Activated CD8-positive, alpha-beta T cell treated with anti-CD3 and anti-CD28 coated beads, Interleukin-2, amount 10 ng/mL, durations not matched to agents 7 days and 5 days (primary cell): ENCODE measurements at regions of chr3 and their contacts with region 1.

Region 1: GRCh38 chr3:120795017-120795648 is 52.6 kb downstream of the GTF2E1 start:
- DNase-seq: peak; percentile 87
- ATAC-seq: peak; percentile 98
- H3K4me3 Mint-ChIP-seq: no peak overlapping the region
- H3K27ac Mint-ChIP-seq: no peak overlapping the region
- H3K4me1 Mint-ChIP-seq: no peaks in the 10 kb centered on the region
- H3K27me3 Mint-ChIP-seq: peaks cover 3% of the 10 kb centered on the region

Region 2: DNA sequence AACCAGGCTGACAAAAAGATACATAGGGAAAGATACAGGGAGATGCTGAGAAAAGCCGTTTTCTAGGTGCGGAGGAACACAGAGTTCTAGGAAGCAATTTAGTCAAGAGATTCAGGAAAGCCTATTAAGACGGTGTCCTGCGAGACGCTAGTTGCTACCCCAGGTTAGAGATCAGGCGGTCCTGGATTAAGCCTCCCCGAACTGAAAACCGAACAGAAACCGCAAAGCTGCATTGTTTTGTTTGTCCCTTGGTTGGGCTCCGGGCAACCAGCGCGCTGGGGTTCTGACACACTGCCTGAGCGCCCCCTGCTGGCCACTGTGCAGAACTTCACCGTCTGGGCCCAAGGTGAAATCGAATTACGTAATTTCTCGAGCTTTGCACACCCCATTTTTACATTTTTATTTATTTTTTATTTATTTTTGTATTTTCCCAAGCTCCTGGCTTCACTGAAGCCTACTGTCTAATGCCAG is 236.3 kb before region 1 on chr3:
- CTCF ChIA-PET with region 1: interaction called, 65 read pairs
- POLR2A ChIA-PET with region 1: interaction called, 5 read pairs
- DNase-seq: peak; percentile 92
- ATAC-seq: peak; percentile 93
- H3K4me3 Mint-ChIP-seq: peak overlapping the region; percentile 76
- H3K27ac Mint-ChIP-seq: peak overlapping the region; percentile 45
- H3K4me1 Mint-ChIP-seq: peaks cover 11% of the 10 kb centered on the region
- H3K27me3 Mint-ChIP-seq: peaks cover 3% of the 10 kb centered on the region

Region 3: DNA sequence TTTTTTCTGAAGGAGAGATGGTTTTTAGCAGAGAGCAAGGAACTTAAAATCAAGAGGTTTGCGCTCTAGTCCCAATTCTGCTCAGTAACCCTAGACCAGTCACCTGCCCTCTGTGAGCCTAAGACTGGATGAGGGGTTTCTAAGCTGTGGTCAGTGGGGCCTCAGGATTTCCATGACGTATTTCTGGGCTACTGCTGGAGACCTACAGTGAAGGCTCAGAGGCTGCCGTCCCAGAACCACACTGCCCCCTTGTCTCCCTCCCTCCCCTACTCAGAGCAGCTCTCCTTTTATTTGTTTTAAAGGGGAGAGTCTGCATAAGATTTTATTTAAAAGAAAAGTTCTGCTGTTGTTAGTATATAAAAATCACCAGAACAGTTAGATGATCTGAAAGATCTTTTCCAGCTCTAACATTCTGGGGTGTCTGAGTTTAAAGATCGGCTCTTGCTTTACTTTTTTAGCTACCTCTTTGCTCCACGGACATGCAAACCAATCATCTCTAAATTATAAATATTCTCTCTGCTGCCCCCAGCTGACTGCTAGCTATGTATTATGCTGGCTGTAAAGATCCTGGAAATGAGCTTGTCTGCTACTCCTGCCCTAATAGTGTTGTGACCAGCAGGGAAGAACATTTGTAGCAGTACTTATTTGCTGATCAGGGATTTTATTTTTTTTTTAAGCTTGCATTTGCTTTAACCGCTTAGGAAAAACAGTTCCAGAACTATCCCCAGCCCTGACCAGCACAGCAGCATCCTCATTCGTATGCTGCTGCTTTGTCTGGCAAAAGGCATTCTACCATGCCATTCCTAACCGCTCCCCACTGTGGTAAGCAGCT is 227.5 kb before region 1 on chr3:
- CTCF ChIA-PET with region 1: interaction called, 65 read pairs
- POLR2A ChIA-PET with region 1: interaction called, 3 read pairs
- DNase-seq: no peak
- ATAC-seq: peak; percentile 63
- H3K4me3 Mint-ChIP-seq: no peak overlapping the region
- H3K27ac Mint-ChIP-seq: no peak overlapping the region
- H3K4me1 Mint-ChIP-seq: peaks cover 2% of the 10 kb centered on the region
- H3K27me3 Mint-ChIP-seq: peaks cover 2% of the 10 kb centered on the region

Region 4: DNA sequence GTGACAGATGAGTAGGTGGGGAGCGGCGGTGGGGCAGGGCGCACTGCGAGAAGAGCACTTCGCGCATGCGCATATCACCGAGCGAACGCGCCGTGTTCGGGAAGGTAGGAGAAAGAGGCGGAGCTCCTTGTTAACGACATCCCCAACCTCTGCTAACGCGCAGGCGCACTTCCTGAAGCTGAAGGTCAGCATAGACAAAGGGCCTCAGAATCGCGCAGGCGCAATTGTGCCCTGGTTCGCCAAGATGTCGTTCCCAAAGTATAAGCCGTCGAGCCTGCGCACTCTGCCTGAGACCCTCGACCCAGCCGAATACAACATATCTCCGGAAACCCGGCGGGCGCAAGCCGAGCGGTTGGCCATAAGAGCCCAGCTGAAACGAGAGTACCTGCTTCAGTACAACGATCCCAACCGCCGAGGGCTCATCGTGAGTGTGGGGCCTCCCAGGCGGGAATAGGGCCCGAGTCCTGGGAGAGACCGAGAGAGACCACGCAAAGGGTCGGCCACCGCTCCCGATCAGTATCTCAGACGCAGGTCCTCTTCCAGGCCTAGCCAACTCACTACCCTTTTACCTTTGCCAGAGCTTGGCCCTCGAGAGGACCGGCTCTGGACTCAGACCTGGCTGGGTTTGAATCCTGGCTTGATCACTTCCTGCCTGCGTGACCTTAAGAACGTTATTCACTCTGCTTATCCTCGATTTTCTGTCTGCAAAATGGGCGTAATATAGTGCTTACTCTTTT is 198.8 kb before region 1 on chr3 and contains the start of gene NDUFB4:
- CTCF ChIA-PET with region 1: interaction called, 24 read pairs
- POLR2A ChIA-PET with region 1: interaction called, 5 read pairs
- DNase-seq: peak; percentile 97
- ATAC-seq: peak; percentile 99
- H3K4me3 Mint-ChIP-seq: peak within 1 kb of the TSS; percentile 87
- H3K27ac Mint-ChIP-seq: peak within 1 kb of the TSS; percentile 94
- H3K4me1 Mint-ChIP-seq: peaks cover 8% of the 10 kb centered on the region
- H3K27me3 Mint-ChIP-seq: peaks cover 3% of the 10 kb centered on the region
- total RNA-seq, gene NDUFB4: 119 to 124 TPM

Region 5: GRCh38 chr3:120730576-120731542 is 64.3 kb before region 1 on chr3:
- CTCF ChIA-PET with region 1: no interaction called
- POLR2A ChIA-PET with region 1: no interaction called
- DNase-seq: no peak
- ATAC-seq: no peak
- H3K4me3 Mint-ChIP-seq: no peak overlapping the region
- H3K27ac Mint-ChIP-seq: no peak overlapping the region
- H3K4me1 Mint-ChIP-seq: no peaks in the 10 kb centered on the region
- H3K27me3 Mint-ChIP-seq: no peaks in the 10 kb centered on the region

Region 6: DNA sequence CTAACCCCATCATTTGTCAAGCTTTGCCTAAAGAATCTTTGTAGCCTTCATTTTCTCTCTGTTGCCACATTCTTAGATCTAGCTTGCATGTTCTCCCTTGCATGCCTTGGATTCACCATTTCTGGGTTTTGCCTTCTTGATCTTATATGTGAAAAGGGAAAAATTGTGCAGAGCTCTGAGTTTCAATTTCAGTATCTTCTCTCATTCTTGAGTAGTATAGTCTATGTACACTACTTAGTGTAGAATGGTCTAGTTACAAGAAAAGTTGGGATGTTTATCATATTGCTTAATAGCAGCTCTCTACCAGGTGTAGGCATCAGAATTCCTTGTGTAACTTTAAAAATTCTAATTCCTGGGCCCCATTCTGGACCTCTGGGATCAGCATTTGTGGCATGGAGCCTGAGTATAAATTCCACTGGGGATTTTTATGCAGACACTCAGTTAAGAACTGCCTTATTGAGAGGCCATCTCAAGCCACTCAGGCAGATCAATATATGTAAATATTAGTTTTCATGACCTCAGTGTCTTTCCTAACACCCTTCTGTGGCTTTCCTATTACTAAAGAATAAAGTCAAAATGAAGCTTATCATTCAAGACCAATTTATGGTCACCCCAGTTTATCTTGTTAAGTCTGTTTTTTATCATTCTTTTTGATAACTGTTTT is 29.2 kb before region 1 on chr3:
- CTCF ChIA-PET with region 1: interaction called, 13 read pairs
- POLR2A ChIA-PET with region 1: no interaction called
- DNase-seq: no peak
- ATAC-seq: no peak
- H3K4me3 Mint-ChIP-seq: no peak overlapping the region
- H3K27ac Mint-ChIP-seq: no peak overlapping the region
- H3K4me1 Mint-ChIP-seq: peaks cover 3% of the 10 kb centered on the region
- H3K27me3 Mint-ChIP-seq: no peaks in the 10 kb centered on the region

Region 7: DNA sequence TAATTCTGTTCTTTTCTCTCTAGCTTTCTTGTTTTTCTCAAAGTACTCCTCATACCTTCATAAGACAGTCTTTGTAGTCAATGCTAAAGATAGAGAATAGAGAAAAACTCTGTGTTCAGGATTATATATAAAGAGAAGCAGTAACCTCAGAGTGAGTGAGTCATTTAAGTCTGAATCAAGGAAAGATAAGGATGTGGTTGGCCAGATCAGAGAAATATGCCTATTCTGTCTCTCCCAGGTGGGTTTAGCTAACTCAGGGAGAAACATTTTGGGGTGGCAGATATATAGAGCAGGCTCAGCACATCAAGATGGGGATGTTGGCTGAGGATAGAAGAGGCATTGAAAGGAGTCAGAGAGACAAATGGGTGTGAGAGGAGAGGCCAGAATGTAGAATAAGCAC is 21.2 kb before region 1 on chr3:
- CTCF ChIA-PET with region 1: interaction called, 13 read pairs
- POLR2A ChIA-PET with region 1: no interaction called
- DNase-seq: no peak
- ATAC-seq: peak; percentile 64
- H3K4me3 Mint-ChIP-seq: no peak overlapping the region
- H3K27ac Mint-ChIP-seq: no peak overlapping the region
- H3K4me1 Mint-ChIP-seq: peaks cover 15% of the 10 kb centered on the region
- H3K27me3 Mint-ChIP-seq: no peaks in the 10 kb centered on the region